ENCODE measurements at regions of chr20 and their contacts with region 1.

Region 1: GRCh38 chr20:24781422-24781980 is 167.6 kb upstream of the CST7 start:
- DNase-seq: peak; percentile 27
- H3K4me3 ChIP-seq: no peak overlapping the region
- H3K27ac ChIP-seq: no peak overlapping the region
- H3K4me1 ChIP-seq: peaks cover 7% of the 10 kb centered on the region
- H3K27me3 ChIP-seq: no peaks in the 10 kb centered on the region
- CTCF ChIP-seq: peak; percentile 43 to 66

Region 2: DNA sequence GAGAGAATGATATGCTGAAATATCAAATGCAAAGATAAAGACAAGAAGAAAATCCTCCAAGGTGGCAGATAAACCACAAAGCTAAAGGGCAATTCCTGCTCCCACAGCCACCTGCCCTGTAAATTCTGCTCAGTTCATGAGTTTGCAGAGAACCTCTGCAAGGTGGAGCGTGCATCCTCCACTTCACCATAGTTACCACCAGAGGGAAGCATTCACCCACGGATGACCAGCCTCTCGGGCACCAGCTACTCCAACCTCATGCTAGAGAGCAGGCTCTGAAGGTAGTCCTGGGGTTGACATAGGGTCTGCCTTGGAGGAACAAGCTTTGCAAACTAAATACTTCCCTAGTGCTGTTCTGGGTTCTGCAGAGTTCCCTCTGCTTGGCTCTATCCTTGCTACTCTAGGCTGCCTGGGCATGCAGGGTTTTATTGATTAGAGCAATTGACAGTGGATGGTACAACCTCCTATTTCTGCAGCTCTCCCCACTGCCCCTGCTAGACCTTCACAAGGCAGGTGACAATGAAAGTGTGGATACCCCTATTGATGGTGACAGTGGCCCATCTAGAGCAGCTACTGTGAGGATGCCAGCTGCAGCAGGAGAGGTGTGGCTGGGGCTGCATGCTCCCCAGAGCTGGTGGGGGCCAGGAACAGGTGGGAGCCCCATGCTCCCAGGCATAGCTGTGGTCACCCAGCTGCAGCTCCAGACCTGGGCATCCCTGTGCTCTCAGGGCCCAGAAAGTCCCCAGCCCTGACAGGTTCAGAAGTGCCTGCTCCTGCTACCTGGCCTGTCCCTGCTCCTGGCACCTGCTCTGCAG is 844.0 kb before region 1 on chr20:
- CTCF ChIA-PET with region 1: no interaction called
- dilution Hi-C with region 1: no loop called
- in situ Hi-C with region 1: no loop called
- intact Hi-C with region 1: loop called (anchors 1 kb)
- DNase-seq: peak; percentile 42
- H3K4me3 ChIP-seq: no peak overlapping the region
- H3K27ac ChIP-seq: no peak overlapping the region
- H3K4me1 ChIP-seq: no peaks in the 10 kb centered on the region
- H3K27me3 ChIP-seq: no peaks in the 10 kb centered on the region
- CTCF ChIP-seq: peak; percentile 62 to 74

Region 3: DNA sequence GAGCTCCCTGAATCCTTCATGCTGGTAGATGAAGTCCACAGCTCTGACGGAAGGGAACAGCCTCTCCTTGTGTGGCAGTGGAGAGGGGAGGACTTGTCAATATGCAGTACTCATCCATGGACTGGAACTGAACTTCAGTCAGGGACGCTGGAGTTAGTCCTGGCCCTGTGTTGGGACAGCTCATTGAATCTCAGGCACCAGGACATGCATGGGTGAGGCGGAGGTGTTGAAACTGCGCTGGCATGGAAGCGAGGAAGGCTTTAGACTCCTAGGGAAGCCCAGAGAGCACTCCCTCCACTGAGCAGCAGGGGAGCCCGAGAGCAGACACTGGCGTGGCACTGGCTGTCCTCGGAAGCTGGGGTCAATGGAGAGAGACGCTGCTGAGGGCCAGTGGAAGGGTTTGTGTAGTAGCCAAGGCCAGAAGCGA is 631.6 kb before region 1 on chr20:
- CTCF ChIA-PET with region 1: no interaction called
- dilution Hi-C with region 1: no loop called
- in situ Hi-C with region 1: loop called in 1 of 2 experiments (anchors 10 kb)
- intact Hi-C with region 1: no loop called
- DNase-seq: no peak
- H3K4me3 ChIP-seq: no peak overlapping the region
- H3K27ac ChIP-seq: no peak overlapping the region
- H3K4me1 ChIP-seq: no peaks in the 10 kb centered on the region
- H3K27me3 ChIP-seq: no peaks in the 10 kb centered on the region
- CTCF ChIP-seq: peak; percentile 29 to 35

Region 4: DNA sequence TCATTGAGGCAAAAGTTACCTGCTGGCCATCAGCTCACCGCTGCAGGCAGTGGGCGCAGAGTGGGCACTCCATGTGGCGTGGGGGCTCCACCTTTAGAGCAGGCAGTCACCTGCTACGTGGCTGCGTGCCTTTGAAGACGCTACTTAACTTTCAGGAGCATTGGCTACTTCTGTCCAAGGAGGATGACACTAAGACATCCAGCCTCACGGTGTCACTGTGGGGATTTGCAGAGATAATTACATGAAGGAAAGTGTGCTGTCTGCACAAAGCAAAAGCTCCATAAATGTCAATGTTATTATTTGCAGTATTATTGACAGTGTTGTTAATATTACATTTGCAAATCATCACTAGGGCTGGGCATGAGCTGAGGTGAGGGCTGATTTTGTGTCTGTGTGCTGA is 478.1 kb before region 1 on chr20:
- CTCF ChIA-PET with region 1: no interaction called
- dilution Hi-C with region 1: no loop called
- in situ Hi-C with region 1: loop called in 1 of 2 experiments (anchors 25 kb)
- intact Hi-C with region 1: loop called (anchors 1 kb)
- DNase-seq: no peak
- H3K4me3 ChIP-seq: no peak overlapping the region
- H3K27ac ChIP-seq: no peak overlapping the region
- H3K4me1 ChIP-seq: no peaks in the 10 kb centered on the region
- H3K27me3 ChIP-seq: no peaks in the 10 kb centered on the region
- CTCF ChIP-seq: peak in 1 of 2 donors; percentile 24

Region 5: DNA sequence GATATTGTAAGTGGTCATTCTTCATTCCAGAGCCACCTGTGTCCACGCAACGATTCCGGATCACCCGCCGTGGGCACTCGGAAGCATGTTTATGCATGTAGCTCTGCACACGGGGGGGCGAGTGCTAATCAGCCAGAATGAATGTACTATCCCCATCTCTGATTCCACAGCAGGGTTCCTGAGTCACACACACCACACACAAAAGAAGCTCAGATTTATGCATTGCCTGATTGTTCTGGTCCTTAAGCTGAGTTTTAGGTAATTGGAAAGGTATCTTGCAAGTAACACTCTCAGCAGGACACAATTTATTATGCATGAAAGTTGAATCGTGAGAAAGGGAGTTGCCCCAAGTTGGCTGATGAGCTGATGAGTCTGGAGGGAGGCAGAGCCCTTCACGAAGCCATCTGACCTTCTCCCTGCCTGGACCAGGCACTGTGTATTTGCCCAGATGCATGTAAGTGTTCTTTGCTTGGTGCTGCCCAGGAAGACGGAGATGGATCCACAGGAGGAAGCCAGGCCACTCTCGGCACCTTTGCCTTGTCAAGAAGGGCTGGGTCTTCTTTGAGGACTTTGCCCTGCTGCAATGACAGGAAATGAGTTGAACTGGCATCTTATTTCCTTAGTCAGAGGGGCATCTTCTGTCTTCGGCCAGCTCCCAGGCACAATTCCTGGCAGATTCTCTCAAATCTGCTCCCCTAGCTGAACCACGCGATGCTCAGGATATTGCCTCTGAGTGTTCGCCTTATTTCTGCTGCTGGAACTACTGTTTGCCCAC is 171.0 kb before region 1 on chr20:
- CTCF ChIA-PET with region 1: no interaction called
- dilution Hi-C with region 1: no loop called
- in situ Hi-C with region 1: no loop called
- intact Hi-C with region 1: loop called (anchors 5 kb)
- DNase-seq: peak; percentile 87
- H3K4me3 ChIP-seq: no peak overlapping the region
- H3K27ac ChIP-seq: no peak overlapping the region
- H3K4me1 ChIP-seq: peaks cover 23% of the 10 kb centered on the region
- H3K27me3 ChIP-seq: no peaks in the 10 kb centered on the region
- CTCF ChIP-seq: no peak

Region 6: GRCh38 chr20:24880356-24880755 is 98.9 kb after region 1 on chr20:
- CTCF ChIA-PET with region 1: no interaction called
- dilution Hi-C with region 1: loop called (anchors 5 kb)
- in situ Hi-C with region 1: no loop called
- intact Hi-C with region 1: no loop called
- DNase-seq: no peak
- H3K4me3 ChIP-seq: no peak overlapping the region
- H3K27ac ChIP-seq: no peak overlapping the region
- H3K4me1 ChIP-seq: no peaks in the 10 kb centered on the region
- H3K27me3 ChIP-seq: peaks cover 2% of the 10 kb centered on the region
- CTCF ChIP-seq: no peak

Region 7: DNA sequence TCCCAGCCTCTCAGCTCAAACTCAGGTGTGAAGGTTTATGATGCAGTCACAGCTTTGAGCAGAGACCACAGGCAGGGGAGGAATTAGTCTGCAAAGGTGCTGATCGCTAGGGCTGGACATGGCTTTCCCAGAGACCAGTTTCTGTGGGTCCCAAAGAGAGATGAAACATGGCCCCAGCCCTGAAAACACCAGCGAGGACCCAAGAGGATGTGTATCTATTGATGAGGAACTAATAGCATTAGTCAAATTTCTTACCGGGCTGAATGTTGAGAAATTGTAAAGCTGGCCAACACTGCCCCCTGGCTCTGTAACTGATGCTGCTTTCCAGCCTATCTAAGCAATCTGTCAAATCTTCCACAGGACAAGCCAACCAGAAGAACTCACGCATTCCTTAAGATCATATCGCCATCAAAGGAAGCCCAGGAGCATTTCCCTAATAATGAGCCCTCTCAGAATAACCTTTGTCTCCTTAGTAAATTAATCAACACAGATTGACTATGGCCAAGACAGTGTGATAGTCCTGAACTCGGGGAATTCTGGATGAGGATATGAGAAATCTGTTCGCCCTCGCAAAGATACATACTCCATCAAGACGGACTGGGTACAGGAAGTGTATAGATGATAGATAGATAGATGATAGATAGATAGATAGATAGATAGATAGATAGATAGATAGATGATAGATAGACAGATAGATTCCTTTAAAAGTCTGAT is 284.3 kb after region 1 on chr20:
- CTCF ChIA-PET with region 1: no interaction called
- dilution Hi-C with region 1: no loop called
- in situ Hi-C with region 1: no loop called
- intact Hi-C with region 1: loop called (anchors 5 kb)
- DNase-seq: peak; percentile 44
- H3K4me3 ChIP-seq: no peak overlapping the region
- H3K27ac ChIP-seq: no peak overlapping the region
- H3K4me1 ChIP-seq: no peaks in the 10 kb centered on the region
- H3K27me3 ChIP-seq: peaks cover 16% of the 10 kb centered on the region
- CTCF ChIP-seq: peak; percentile 82 to 84